HEK293T (cell line): ENCODE measurements at regions of chr16 and their contacts with region 1.

Region 1: DNA sequence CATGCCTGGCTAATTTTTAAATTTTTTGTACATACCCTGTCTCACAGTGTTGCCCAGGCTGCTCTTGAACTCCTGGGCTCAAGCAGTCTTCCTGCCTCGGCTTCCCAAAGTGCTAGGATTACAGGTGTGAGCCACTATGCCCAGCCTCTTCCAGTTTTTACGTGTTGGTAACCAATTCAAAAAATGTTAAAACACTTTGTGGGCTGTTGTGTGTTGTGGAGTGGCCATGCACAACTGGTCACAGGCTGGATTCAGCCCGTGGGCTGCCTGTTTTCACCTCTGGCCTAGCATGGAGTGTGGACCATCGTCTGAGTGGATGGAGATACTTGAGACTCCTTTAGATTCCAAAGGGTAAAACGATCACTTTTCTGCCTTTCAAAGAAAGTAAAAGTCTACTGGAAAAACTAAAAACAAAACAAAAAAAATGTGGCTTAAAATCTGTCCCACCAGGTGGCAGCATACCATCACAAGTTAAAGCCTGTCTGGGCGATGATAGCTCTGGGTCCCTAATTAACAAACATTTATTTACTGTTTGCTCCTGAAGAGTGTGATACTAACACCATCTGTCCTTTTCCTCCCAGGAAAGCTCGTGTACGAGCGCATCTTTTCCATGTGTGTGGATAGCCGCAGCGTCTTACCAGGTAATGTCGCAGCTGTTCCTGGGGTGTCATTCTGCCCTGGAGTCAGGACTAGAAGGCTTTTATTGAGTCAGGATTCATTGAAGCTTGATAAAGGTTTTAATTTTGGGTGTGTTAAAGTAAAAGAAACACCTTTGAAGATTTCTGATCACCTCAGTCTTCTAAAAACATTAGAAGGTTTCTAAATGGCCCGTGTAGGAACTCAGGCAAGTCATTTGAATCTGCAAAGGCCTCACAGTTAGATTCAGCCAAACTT is 45.8 kb downstream of the VPS35L start:
- DNase-seq: peak; percentile 36

Region 2: GRCh38 chr16:19574615-19575014 is 26.7 kb before region 1 on chr16:
- CTCF ChIA-PET with region 1: no interaction called
- POLR2A ChIA-PET with region 1: no interaction called
- DNase-seq: no peak

Region 3: GRCh38 chr16:19886073-19886941 is 285.0 kb after region 1 on chr16:
- CTCF ChIA-PET with region 1: interaction called, 16 read pairs
- POLR2A ChIA-PET with region 1: no interaction called
- DNase-seq: peak; percentile 72